ENCODE measurements at regions of chr11 and their contacts with region 1.

Region 1: GRCh38 chr11:60363542-60364510 is 14.5 kb upstream of the MS4A7 start:
- DNase-seq: peak; percentile 77
- H3K4me3 Mint-ChIP-seq: no peak overlapping the region
- H3K27ac Mint-ChIP-seq: no peak overlapping the region
- H3K4me1 Mint-ChIP-seq: peaks cover 8% of the 10 kb centered on the region
- H3K27me3 Mint-ChIP-seq: peaks cover 30% of the 10 kb centered on the region
- CTCF ChIP-seq: peak; percentile 79

Region 2: DNA sequence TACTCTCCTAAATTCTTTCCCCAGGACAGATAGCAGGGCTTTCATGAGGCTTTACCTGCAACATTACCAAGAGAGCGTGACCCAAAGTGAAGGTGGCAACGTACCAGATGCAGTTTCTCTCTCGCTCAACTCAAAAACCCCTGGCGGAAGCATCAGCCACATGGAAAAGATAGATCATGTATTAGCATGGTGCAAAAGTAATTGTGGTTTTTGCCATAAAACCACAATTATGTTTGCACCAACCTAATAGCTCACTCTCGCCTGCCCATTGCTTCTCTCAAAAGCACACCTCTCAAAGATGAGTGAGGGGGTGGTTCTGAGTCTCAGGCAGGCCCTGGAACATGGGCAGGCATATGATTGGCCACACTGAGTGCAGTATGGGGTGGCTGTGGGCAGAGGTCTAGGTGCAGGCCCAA is 188.0 kb before region 1 on chr11:
- CTCF ChIA-PET with region 1: no interaction called
- POLR2A ChIA-PET with region 1: no interaction called
- intact Hi-C with region 1: no loop called
- DNase-seq: no peak
- H3K4me3 Mint-ChIP-seq: no peak overlapping the region
- H3K27ac Mint-ChIP-seq: no peak overlapping the region
- H3K4me1 Mint-ChIP-seq: no peaks in the 10 kb centered on the region
- H3K27me3 Mint-ChIP-seq: no peaks in the 10 kb centered on the region
- CTCF ChIP-seq: no peak

Region 3: DNA sequence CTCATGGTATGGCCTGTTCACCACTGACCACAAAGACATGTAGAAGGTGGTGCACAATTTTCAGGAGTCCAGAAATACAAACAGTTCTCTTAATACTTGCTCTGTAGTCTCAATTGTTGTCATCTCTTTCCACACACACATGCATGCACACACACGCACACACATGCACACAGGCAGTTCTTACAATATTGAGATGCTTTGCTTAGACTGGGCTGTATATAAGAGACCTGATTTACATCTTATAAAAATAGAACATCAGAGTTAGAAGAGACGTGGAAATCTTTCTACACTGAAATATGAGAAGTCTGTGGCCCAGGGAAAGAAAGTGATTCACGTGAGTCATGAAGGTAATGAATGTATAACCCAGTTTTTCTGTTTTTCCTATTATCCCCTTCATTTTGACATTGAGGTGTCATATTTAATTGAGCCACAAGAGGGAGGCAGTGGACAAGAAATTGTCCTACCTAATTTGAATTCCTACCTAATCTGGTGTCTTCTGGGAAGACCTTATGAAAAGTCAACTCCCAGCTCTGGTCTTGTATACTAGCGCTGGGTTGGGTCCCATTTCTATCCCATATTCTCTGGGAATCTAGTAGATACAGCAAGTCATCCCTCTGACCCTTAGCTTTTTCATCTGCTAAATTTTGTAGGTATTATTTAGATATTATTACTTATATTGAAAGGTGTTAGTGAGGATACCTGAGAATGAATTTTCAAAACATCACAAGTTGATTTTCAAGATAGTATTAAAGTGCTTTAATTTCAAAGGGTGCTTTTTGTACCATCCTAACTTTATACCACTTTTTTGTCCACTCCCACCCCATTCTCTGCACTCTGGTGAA is 98.2 kb before region 1 on chr11:
- CTCF ChIA-PET with region 1: interaction called, 15 read pairs
- POLR2A ChIA-PET with region 1: interaction called, 4 read pairs
- intact Hi-C with region 1: no loop called
- DNase-seq: peak; percentile 66
- H3K4me3 Mint-ChIP-seq: no peak overlapping the region
- H3K27ac Mint-ChIP-seq: no peak overlapping the region
- H3K4me1 Mint-ChIP-seq: no peaks in the 10 kb centered on the region
- H3K27me3 Mint-ChIP-seq: peaks cover 12% of the 10 kb centered on the region
- CTCF ChIP-seq: peak; percentile 64

Region 4: GRCh38 chr11:60378354-60378753 is 14.5 kb after region 1 on chr11 and contains the start of gene MS4A7:
- CTCF ChIA-PET with region 1: interaction called, 11 read pairs
- POLR2A ChIA-PET with region 1: no interaction called
- intact Hi-C with region 1: no loop called
- DNase-seq: no peak
- H3K4me3 Mint-ChIP-seq: no peak within 1 kb of the TSS
- H3K27ac Mint-ChIP-seq: no peak within 1 kb of the TSS
- H3K4me1 Mint-ChIP-seq: no peaks in the 10 kb centered on the region
- H3K27me3 Mint-ChIP-seq: peaks cover 35% of the 10 kb centered on the region
- CTCF ChIP-seq: no peak
- total RNA-seq, gene MS4A7: not detected in 2 replicates

Region 5: DNA sequence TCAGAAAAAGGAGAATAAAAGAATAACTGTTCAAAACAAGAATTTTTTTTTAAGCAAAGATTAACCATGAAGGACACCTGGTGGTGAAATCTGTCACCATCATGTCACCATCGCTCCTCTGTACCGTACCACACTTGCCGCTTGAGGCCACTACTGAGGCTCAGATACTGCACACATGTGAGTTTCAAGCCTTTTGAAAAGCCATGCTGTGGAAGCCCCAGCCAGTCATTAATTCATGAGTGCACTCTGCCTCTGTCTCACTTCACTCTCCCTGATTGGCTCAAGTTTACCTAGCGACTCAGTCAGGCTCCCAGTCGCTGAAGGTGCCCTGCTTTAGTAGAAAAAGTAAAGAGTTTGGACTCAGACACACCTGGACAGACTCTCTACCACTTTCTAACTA is 122.2 kb after region 1 on chr11:
- CTCF ChIA-PET with region 1: interaction called, 3 read pairs
- POLR2A ChIA-PET with region 1: no interaction called
- intact Hi-C with region 1: loop called (anchors 5 kb)
- DNase-seq: peak; percentile 5
- H3K4me3 Mint-ChIP-seq: no peak overlapping the region
- H3K27ac Mint-ChIP-seq: no peak overlapping the region
- H3K4me1 Mint-ChIP-seq: no peaks in the 10 kb centered on the region
- H3K27me3 Mint-ChIP-seq: no peaks in the 10 kb centered on the region
- CTCF ChIP-seq: no peak

Region 6: DNA sequence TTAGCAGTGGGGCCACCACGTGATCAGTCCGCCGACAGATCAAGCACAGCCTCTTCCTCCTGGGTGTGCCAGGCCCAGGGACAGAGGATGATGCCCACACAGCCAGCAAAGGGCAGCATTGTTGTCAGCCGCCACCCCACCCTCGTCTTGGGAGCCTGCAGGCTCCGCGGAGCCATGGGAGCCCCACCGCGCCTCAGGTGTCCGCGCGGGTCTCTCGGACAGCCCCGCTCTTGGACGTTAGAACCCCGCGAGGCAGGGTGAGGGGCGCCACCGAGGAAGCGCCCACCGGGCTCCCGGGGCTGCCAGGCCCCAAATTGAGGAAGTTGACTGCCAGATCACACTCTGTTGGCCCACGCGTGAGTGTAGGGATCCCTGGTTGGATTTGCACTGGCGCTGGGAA is 251.7 kb after region 1 on chr11:
- CTCF ChIA-PET with region 1: interaction called, 87 read pairs
- POLR2A ChIA-PET with region 1: no interaction called
- intact Hi-C with region 1: loop called (anchors 1 kb)
- DNase-seq: no peak
- H3K4me3 Mint-ChIP-seq: no peak overlapping the region
- H3K27ac Mint-ChIP-seq: no peak overlapping the region
- H3K4me1 Mint-ChIP-seq: no peaks in the 10 kb centered on the region
- H3K27me3 Mint-ChIP-seq: peaks cover 29% of the 10 kb centered on the region
- CTCF ChIP-seq: no peak

Region 7: DNA sequence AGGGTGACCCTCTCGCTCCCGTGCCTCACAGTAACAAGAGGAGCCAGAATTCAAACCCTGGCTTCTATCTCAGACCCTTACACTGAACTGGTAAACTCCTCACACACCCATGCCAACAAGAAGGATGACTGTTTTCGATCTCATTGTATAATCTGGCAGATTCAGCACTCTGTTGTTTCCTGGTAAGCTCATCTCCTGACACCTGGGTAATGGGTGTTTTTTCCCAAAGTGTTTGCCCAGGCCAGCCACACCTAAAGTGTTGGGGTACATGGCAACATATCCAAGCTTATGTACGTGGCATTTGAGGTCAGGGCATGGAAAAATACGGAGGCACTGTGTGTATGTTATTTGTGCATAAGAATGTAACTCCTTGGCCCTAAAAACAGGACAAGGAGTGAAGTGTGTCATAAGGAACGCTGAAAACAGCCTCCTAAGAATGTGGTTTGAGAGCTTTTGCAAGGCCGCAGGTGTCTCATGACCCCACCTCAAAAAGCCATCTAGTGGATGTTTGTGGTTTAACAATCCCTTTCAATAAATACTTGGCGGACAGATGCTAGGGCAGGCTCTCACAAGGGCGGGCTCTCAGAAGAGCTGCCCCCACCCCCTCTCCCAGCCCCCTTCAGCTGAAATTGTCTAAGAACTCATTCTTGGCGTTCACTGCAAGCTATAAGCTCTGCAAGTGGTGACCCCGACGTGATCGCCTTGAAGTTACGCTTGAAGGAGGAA is 392.6 kb after region 1 on chr11 and contains the start of gene MS4A15:
- CTCF ChIA-PET with region 1: interaction called, 6 read pairs
- POLR2A ChIA-PET with region 1: no interaction called
- intact Hi-C with region 1: loop called (anchors 2 kb)
- DNase-seq: peak; percentile 52
- H3K4me3 Mint-ChIP-seq: no peak within 1 kb of the TSS
- H3K27ac Mint-ChIP-seq: no peak within 1 kb of the TSS
- H3K4me1 Mint-ChIP-seq: no peaks in the 10 kb centered on the region
- H3K27me3 Mint-ChIP-seq: peaks cover 53% of the 10 kb centered on the region
- CTCF ChIP-seq: peak; percentile 36
- total RNA-seq, gene MS4A15: not detected in 2 replicates

Measured in MCF 10A (cell line).